Heart right ventricle (tissue), 16 donors: ENCODE measurements at regions of chr2 and their contacts with region 1.

Region 1: GRCh38 chr2:120245354-120245791 is 7.3 kb upstream of the RALB start:
- DNase-seq: no peak
- ATAC-seq: peak in 4 of 8 donors; percentile 4 to 56 (median 48)
- H3K4me3 ChIP-seq: no peak overlapping the region
- H3K27ac ChIP-seq: peak overlapping the region in 1 of 10 donors; percentile 23
- H3K4me1 ChIP-seq: peaks cover 7 to 44% (median 21%) of the 10 kb centered on the region in 9 donors
- H3K27me3 ChIP-seq: peaks cover 0 to 10% (median 0%) of the 10 kb centered on the region in 7 donors
- CTCF ChIP-seq: no peak

Region 2: DNA sequence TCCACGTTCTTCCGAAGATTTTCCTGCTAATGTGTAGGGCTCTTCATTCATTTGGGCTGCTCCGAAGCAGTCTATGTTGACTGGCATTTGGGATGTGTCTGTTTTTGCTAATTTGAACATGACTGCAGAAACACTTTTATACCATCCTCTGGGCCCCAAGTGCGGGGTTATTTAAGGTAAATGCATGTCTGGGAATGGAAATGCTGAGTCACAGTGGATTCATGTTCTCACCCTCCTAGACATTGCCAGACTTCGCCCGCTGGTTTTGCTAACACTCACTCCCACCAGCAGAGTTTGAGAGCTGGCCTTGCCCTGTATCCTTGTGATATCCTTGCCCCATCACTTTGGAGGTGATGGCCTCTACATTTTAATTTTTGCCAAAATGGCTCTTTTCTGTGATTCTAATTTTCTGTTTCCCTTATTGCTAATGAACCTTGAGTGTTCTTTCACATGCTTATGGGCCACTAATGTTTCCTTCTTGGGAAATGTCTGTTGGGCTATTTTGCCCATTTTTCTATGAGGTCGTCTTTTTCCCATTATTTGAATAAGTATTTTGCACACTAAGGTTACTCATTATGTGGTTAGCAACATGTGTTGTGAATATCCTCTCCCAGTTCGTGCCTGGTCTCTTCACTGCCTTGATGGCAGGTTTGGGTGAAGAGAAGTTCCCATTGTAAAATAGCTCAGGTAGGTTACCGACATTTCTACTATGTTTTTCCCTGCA is 694.4 kb after region 1 on chr2:
- intact Hi-C with region 1: loop called in 1 of 10 experiments (anchors 5 kb)
- DNase-seq: no peak
- ATAC-seq: peak in 1 of 8 donors; percentile 25
- H3K4me3 ChIP-seq: no peak overlapping the region
- H3K27ac ChIP-seq: no peak overlapping the region
- H3K4me1 ChIP-seq: peaks cover 0 to 39% (median 18%) of the 10 kb centered on the region in 9 donors
- H3K27me3 ChIP-seq: peaks cover 0 to 4% (median 0%) of the 10 kb centered on the region in 7 donors
- CTCF ChIP-seq: no peak